ENCODE measurements at regions of chr10 and their contacts with region 1.

Region 1: GRCh38 chr10:117496616-117497028 is 45.9 kb upstream of the EMX2 start:
- DNase-seq: peak; percentile 81
- H3K4me3 Mint-ChIP-seq: no peak overlapping the region
- H3K27ac Mint-ChIP-seq: no peak overlapping the region
- H3K4me1 Mint-ChIP-seq: no peaks in the 10 kb centered on the region
- H3K27me3 Mint-ChIP-seq: peaks cover 33% of the 10 kb centered on the region
- CTCF ChIP-seq: peak; percentile 94

Region 2: DNA sequence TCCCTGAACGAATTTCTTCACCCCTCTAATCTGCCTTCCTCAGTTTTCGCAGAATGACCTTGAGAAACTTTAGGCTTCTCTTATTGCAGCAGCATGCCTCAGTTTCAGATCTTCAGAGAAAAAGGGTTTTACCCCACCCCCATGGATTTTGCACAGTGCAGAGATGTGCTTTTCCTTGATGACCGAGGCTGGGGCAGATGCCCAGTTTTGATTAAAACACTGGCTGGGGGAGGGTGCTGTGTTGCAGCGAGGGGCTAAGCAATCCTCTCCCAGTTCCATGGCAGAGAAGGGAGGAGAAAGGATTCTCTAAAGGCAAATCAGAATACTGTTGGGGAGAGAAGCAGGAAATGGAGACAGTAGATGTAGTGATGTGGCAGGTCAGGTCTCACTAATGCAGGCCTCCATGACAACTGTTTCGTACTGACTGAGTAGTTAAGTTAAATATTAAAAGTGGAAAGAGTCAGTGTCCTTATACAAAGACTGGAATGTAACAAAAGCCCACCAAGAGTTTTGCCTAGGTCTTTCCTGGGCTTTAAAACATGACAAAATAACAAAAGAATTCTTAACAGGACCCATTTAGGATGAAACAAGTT is 70.6 kb before region 1 on chr10:
- CTCF ChIA-PET with region 1: interaction called, 77 read pairs
- POLR2A ChIA-PET with region 1: interaction called, 5 read pairs
- intact Hi-C with region 1: loop called (anchors 1 kb)
- DNase-seq: no peak
- H3K4me3 Mint-ChIP-seq: no peak overlapping the region
- H3K27ac Mint-ChIP-seq: no peak overlapping the region
- H3K4me1 Mint-ChIP-seq: no peaks in the 10 kb centered on the region
- H3K27me3 Mint-ChIP-seq: no peaks in the 10 kb centered on the region
- CTCF ChIP-seq: no peak

Region 3: GRCh38 chr10:117442944-117443685 is 53.5 kb before region 1 on chr10:
- CTCF ChIA-PET with region 1: interaction called, 20 read pairs
- POLR2A ChIA-PET with region 1: no interaction called
- intact Hi-C with region 1: no loop called
- DNase-seq: peak; percentile 97
- H3K4me3 Mint-ChIP-seq: peak overlapping the region; percentile 29
- H3K27ac Mint-ChIP-seq: no peak overlapping the region
- H3K4me1 Mint-ChIP-seq: peaks cover 29% of the 10 kb centered on the region
- H3K27me3 Mint-ChIP-seq: no peaks in the 10 kb centered on the region
- CTCF ChIP-seq: peak; percentile 86

Region 4: DNA sequence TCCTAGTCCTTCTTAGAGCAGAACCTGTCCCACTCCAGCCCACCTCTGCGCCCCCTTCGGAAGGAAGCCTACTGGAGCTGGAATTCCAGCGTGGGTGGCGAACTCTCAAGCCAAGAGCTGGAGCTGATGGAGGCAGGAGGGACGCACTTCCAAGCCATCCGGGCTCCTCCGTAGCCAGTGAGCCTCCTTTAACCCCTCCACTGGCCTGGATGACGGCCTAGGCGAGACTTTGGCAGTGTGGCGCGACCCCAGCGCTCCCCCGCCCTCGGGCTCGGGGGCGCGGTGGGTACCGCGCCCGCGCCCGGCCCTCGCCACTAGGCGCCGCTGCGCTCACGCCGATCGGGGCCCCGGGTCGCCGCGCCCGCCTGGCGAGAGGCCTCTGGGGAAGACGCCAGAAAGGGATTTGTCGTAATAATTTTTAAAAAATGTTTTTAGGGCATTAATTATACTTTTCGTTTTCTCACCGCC is 40.8 kb after region 1 on chr10:
- CTCF ChIA-PET with region 1: interaction called, 13 read pairs
- POLR2A ChIA-PET with region 1: no interaction called
- intact Hi-C with region 1: no loop called
- DNase-seq: no peak
- H3K4me3 Mint-ChIP-seq: no peak overlapping the region
- H3K27ac Mint-ChIP-seq: no peak overlapping the region
- H3K4me1 Mint-ChIP-seq: no peaks in the 10 kb centered on the region
- H3K27me3 Mint-ChIP-seq: peaks cover 33% of the 10 kb centered on the region
- CTCF ChIP-seq: peak; percentile 80

Region 5: DNA sequence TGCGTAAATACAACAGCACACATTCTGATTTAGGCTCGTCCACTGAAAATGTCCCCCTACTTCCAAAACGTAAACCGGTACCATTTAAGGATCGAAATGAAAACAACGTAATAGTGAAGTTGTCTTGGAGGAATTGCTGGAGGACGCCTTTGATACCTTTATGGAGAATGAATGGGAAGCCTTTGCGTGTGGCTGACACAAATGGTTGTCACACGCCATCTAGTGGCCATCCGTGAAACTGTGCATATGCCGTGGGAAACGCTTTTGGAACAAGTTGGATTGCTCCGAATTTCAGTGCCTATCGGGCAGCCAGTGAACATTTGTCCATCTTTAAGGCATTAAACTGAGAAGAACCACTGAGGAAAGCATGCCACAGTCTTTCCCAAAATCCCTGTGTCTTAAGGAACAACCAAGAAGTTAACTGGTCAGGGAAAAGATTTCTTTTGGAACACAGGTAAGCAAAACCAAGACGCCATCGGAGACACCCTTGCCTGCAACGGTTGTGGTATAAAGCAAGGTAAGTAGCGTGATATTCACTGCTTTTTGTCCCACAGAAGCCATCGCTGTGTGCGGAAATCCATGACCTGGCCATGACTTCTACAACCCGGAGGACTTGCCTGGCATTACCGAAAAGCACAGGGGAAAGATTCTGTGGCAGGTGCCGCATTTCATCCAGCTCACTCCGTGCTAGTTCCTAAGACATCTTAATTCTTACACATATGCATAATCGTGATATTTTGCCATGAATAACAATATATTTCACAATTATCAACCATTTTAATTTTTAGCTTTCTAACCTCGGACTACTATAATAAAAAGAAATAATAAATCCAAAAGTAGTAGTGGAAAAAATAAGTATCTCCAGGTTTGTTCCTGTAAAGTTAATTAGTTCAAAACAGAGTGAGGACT is 744.9 kb after region 1 on chr10:
- CTCF ChIA-PET with region 1: interaction called, 87 read pairs
- POLR2A ChIA-PET with region 1: interaction called, 3 read pairs
- intact Hi-C with region 1: loop called (anchors 1 kb)
- DNase-seq: peak; percentile 86
- H3K4me3 Mint-ChIP-seq: peak overlapping the region; percentile 25
- H3K27ac Mint-ChIP-seq: no peak overlapping the region
- H3K4me1 Mint-ChIP-seq: no peaks in the 10 kb centered on the region
- H3K27me3 Mint-ChIP-seq: peaks cover 73% of the 10 kb centered on the region
- CTCF ChIP-seq: peak; percentile 96

Region 6: GRCh38 chr10:118423800-118424479 is 927.3 kb after region 1 on chr10:
- CTCF ChIA-PET with region 1: interaction called, 8 read pairs
- POLR2A ChIA-PET with region 1: no interaction called
- intact Hi-C with region 1: loop called (anchors 1 kb)
- DNase-seq: peak; percentile 90
- H3K4me3 Mint-ChIP-seq: no peak overlapping the region
- H3K27ac Mint-ChIP-seq: no peak overlapping the region
- H3K4me1 Mint-ChIP-seq: peaks cover 5% of the 10 kb centered on the region
- H3K27me3 Mint-ChIP-seq: peaks cover 4% of the 10 kb centered on the region
- CTCF ChIP-seq: peak; percentile 88

Measured in MCF 10A (cell line).